ENCODE measurements at regions of chr3 and their contacts with region 1.

Region 1: GRCh38 chr3:52428151-52429005 is 16.5 kb downstream of the SEMA3G start:
- DNase-seq: peak; percentile 69

Region 2: GRCh38 chr3:52400275-52400793 is 28.0 kb before region 1 on chr3:
- CTCF ChIA-PET with region 1: no interaction called
- POLR2A ChIA-PET with region 1: no interaction called
- DNase-seq: no peak

Region 3: GRCh38 chr3:52444860-52445793 is 16.7 kb after region 1 on chr3 and contains the start of gene SEMA3G:
- CTCF ChIA-PET with region 1: interaction called, 35 read pairs
- POLR2A ChIA-PET with region 1: interaction called, 11 read pairs
- DNase-seq: peak; percentile 85

Region 4: DNA sequence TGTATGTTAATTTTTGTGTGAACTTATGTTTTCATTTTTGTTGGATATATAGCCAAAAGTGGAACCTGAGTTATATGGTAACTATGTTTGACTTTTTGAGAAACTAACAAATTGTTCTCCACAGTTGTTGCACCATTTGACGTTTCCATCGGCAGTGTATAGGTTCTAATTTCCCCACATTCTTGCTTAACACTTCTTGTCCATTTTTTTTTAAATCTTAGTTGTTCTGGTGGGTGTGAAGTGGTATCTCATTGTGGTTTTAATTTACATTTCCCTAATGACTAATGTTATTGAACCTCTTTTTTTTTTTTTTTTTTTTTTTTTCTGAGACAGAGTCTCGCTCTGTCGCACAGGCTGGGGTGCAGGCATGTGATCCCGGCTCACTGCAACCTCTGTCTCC is 35.0 kb after region 1 on chr3:
- CTCF ChIA-PET with region 1: no interaction called
- POLR2A ChIA-PET with region 1: no interaction called
- DNase-seq: no peak

Region 5: GRCh38 chr3:52507359-52507758 is 79.0 kb after region 1 on chr3:
- CTCF ChIA-PET with region 1: no interaction called
- POLR2A ChIA-PET with region 1: no interaction called
- DNase-seq: no peak